Natural killer cell (primary cell): ENCODE measurements at regions of chr12 and their contacts with region 1.

Region 1: GRCh38 chr12:120013659-120014289 is 24.7 kb downstream of the BICDL1 start:
- DNase-seq: peak in 1 of 2 donors; percentile 91
- ATAC-seq: peak; percentile 78 to 93 (median 90)
- H3K4me3 ChIP-seq: no peak overlapping the region
- H3K4me3 Mint-ChIP-seq: peak overlapping the region; percentile 80
- H3K27ac ChIP-seq: peak overlapping the region; percentile 79
- H3K27ac Mint-ChIP-seq: peak overlapping the region; percentile 82 to 89
- H3K4me1 ChIP-seq: peaks cover 36% of the 10 kb centered on the region
- H3K4me1 Mint-ChIP-seq: peaks cover 30 to 36% of the 10 kb centered on the region in 2 donors
- H3K27me3 ChIP-seq: no peaks in the 10 kb centered on the region
- H3K27me3 Mint-ChIP-seq: no peaks in the 10 kb centered on the region
- CTCF ChIP-seq: no peak

Region 2: GRCh38 chr12:119988782-119989668 is 24.7 kb before region 1 on chr12 and contains the start of gene BICDL1:
- intact Hi-C with region 1: loop called (anchors 2 kb)
- DNase-seq: peak; percentile 79 to 100
- ATAC-seq: peak; percentile 75 to 90 (median 77)
- H3K4me3 ChIP-seq: peak within 1 kb of the TSS; percentile 43
- H3K4me3 Mint-ChIP-seq: peak within 1 kb of the TSS; percentile 86
- H3K27ac ChIP-seq: peak within 1 kb of the TSS; percentile 64
- H3K27ac Mint-ChIP-seq: peak within 1 kb of the TSS; percentile 68 to 83
- H3K4me1 ChIP-seq: peaks cover 18% of the 10 kb centered on the region
- H3K4me1 Mint-ChIP-seq: peaks cover 6 to 15% of the 10 kb centered on the region in 2 donors
- H3K27me3 ChIP-seq: no peaks in the 10 kb centered on the region
- H3K27me3 Mint-ChIP-seq: peaks cover under 1 to 2% of the 10 kb centered on the region in 2 donors
- CTCF ChIP-seq: no peak
- total RNA-seq, gene BICDL1: 29.3 to 37.1 (median 34.3) TPM

Region 3: DNA sequence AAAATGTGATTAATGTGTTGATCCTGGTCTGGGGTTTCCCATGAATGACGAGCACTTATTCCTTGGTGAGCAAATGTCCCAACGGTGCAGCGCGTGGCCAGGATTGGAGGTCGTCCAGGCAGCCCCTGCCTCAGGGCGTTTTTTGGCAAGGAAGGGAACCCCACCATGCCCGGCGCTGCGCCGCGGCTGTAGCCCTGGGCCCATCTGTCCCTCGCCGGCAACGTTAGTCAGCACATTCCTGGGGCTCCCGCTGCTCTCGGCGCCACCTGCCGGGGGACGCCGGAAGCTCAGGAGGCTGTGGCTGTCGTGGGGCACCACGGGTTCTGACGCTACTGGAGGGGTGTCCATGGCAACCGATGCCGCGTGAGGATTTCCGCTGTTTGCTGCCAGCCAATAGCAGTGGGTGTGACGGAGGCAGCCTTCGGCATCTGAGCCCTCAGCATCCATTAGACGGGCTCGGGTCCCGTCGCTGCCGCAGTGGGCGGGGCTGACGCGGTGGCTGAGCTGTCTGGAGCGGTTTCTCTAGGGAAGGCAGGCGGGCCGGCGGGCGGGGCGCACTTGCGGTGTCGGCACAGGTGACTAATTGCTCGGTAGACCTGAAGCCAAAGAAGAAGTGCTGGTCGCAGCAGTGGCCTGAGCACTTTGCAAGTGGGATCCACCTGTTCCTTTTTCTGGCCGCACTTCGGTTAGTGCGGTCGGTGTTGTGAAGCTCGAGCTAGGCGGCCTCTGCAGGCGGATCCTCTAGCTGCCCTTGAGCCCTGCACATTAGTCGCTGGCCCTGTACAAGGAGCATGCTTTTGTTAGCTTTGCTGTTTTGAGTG is 73.2 kb after region 1 on chr12:
- intact Hi-C with region 1: loop called (anchors 1 kb)
- DNase-seq: peak; percentile 99 to 100
- ATAC-seq: peak; percentile 92 to 96 (median 92)
- H3K4me3 ChIP-seq: peak overlapping the region; percentile 19
- H3K4me3 Mint-ChIP-seq: peak overlapping the region; percentile 85
- H3K27ac ChIP-seq: peak overlapping the region; percentile 57
- H3K27ac Mint-ChIP-seq: peak overlapping the region; percentile 92 to 94
- H3K4me1 ChIP-seq: peaks cover 14% of the 10 kb centered on the region
- H3K4me1 Mint-ChIP-seq: peaks cover 21 to 22% of the 10 kb centered on the region in 2 donors
- H3K27me3 ChIP-seq: no peaks in the 10 kb centered on the region
- H3K27me3 Mint-ChIP-seq: no peaks in the 10 kb centered on the region
- CTCF ChIP-seq: peak; percentile 88

Region 4: DNA sequence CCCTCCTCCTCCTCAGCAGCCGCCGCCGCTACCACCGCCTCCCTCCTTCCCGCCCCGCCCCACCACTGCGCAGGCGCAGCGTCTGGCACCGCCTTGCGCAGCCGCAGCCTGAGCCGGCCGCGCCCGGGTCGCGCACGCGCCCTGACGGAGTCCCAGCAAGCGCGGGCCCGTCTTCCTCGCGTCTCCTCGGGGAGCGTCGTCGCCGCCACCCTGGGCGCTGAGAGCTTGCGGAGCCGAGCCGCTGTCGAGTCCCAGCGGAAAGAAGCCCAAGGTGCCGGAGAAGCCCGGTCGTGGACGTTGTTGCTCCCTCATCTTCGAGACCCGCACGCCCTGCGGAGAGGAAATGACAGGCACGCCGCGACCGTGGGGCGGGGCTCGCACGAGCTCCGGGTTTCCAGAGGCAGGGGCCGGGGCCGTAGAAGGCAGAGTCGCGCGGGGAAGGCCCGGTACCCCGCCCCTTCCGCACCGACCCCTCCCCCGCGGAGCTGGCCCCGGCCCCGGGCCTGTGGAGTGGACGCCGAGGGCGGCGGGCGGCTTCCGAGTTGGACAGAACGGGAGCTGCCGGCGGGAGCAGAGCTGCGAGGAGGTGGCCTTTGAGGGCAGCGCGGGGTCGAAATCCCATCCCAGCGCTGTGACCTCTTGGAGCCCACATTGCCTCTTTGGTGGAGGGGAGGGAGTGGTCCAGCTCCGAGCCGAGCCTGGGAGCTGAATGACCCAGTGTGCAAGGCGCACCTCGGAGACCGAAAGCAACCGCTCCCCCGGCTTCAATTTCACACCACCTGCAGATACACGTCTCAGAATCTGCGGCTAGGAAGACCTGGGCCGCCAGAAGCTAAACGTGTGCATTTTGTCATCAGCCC is 103.2 kb after region 1 on chr12:
- intact Hi-C with region 1: no loop called
- DNase-seq: peak; percentile 95 to 97
- ATAC-seq: peak; percentile 82 to 92 (median 86)
- H3K4me3 ChIP-seq: peak overlapping the region; percentile 88
- H3K4me3 Mint-ChIP-seq: peak overlapping the region; percentile 95
- H3K27ac ChIP-seq: peak overlapping the region; percentile 85
- H3K27ac Mint-ChIP-seq: peak overlapping the region; percentile 23 to 87
- H3K4me1 ChIP-seq: peaks cover 45% of the 10 kb centered on the region
- H3K4me1 Mint-ChIP-seq: peaks cover 43 to 50% of the 10 kb centered on the region in 2 donors
- H3K27me3 ChIP-seq: no peaks in the 10 kb centered on the region
- H3K27me3 Mint-ChIP-seq: no peaks in the 10 kb centered on the region
- CTCF ChIP-seq: no peak